ENCODE measurements at regions of chr5 and their contacts with region 1.

Region 1: DNA sequence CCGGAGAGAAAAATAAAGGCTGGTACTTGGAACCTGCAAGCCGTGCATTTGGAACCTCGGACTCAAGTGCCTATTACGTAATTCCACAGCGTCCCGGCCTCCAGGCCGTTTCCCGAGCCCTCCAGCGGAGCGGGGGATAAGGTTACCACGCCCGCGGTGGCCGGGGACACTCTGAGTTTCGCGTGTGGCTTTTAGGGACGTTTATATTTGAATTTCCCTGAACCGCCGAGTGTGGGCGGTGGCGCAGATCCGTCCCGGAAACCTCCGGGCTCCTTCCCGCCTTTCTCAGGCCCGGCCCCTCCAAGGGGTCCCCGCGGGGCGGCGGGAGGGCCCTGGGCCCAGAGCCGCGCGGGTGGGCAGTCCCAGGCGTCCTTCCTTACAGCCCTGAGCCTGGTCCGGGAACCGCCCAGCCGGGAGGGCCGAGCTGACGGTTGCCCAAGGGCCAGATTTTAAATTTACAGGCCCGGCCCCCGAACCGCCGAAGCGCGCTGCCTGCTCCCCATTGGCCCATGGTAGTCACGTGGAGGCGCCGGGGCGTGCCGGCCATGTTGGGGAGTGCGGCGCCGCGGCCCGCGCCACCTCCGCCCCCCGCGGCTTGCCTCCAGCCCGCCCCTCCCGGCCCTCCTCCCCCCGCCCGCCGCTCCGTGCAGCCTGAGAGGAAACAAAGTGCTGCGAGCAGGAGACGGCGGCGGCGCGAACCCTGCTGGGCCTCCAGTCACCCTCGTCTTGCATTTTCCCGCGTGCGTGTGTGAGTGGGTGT is at the start of gene LMNB1:
- DNase-seq: peak; percentile 96
- ATAC-seq: peak; percentile 75
- H3K4me3 Mint-ChIP-seq: peak within 1 kb of the TSS; percentile 95
- H3K27ac Mint-ChIP-seq: peak within 1 kb of the TSS; percentile 97
- H3K4me1 Mint-ChIP-seq: peaks cover 23% of the 10 kb centered on the region
- H3K27me3 Mint-ChIP-seq: no peaks in the 10 kb centered on the region
- CTCF ChIP-seq: no peak
- total RNA-seq, gene LMNB1: 198 TPM

Region 2: GRCh38 chr5:126676195-126676624 is 100.5 kb before region 1 on chr5:
- CTCF ChIA-PET with region 1: interaction called, 277 read pairs
- POLR2A ChIA-PET with region 1: interaction called, 62 read pairs
- intact Hi-C with region 1: loop called (anchors 1 kb)
- DNase-seq: peak; percentile 74
- ATAC-seq: peak; percentile 86
- H3K4me3 Mint-ChIP-seq: no peak overlapping the region
- H3K27ac Mint-ChIP-seq: peak overlapping the region; percentile 53
- H3K4me1 Mint-ChIP-seq: peaks cover 3% of the 10 kb centered on the region
- H3K27me3 Mint-ChIP-seq: no peaks in the 10 kb centered on the region
- CTCF ChIP-seq: peak; percentile 83

Region 3: DNA sequence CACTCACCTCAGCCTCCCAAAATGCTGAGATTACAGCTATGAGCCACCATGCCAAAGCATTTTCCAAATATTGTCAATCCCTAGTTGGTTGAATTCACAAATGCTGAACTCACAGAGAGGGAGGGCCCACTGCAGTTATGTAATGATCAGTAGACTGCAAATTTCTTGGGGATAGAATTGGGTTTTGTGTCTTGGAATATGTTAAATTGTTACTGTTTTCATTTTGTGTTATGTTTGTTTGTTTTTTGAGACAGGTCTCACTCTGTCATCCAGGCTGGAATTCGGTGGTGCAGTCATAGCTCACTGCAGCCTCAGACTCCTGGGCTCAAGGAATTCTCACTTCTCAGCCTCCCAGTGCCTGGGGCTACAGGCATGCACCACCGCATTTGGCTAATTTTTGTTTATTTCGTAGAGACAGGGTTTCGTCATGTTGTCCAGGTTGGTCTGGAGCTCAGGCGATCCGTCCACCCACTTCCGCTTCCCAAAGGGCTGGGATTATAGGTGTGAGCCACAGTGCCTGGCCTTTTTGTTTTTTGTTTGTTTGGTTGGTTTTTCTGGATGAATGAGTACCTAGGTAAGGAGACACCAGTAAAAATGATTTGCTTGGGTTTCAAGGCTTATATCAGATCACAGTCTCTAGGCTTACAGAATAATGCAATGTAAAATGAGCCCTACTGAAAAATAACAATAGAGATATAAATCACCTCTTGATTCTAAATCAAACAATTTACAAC is 31.3 kb before region 1 on chr5:
- CTCF ChIA-PET with region 1: interaction called, 12 read pairs
- POLR2A ChIA-PET with region 1: interaction called, 50 read pairs
- intact Hi-C with region 1: loop called (anchors 5 kb)
- DNase-seq: no peak
- ATAC-seq: no peak
- H3K4me3 Mint-ChIP-seq: no peak overlapping the region
- H3K27ac Mint-ChIP-seq: no peak overlapping the region
- H3K4me1 Mint-ChIP-seq: peaks cover 30% of the 10 kb centered on the region
- H3K27me3 Mint-ChIP-seq: peaks cover 4% of the 10 kb centered on the region
- CTCF ChIP-seq: no peak

Region 4: GRCh38 chr5:126794157-126794828 is 17.6 kb after region 1 on chr5:
- CTCF ChIA-PET with region 1: interaction called, 21 read pairs
- POLR2A ChIA-PET with region 1: interaction called, 13 read pairs
- intact Hi-C with region 1: no loop called
- DNase-seq: no peak
- ATAC-seq: no peak
- H3K4me3 Mint-ChIP-seq: no peak overlapping the region
- H3K27ac Mint-ChIP-seq: no peak overlapping the region
- H3K4me1 Mint-ChIP-seq: peaks cover 44% of the 10 kb centered on the region
- H3K27me3 Mint-ChIP-seq: no peaks in the 10 kb centered on the region
- CTCF ChIP-seq: no peak

Region 5: GRCh38 chr5:126808521-126808988 is 31.9 kb after region 1 on chr5:
- CTCF ChIA-PET with region 1: interaction called, 12 read pairs
- POLR2A ChIA-PET with region 1: interaction called, 21 read pairs
- intact Hi-C with region 1: no loop called
- DNase-seq: no peak
- ATAC-seq: no peak
- H3K4me3 Mint-ChIP-seq: no peak overlapping the region
- H3K27ac Mint-ChIP-seq: no peak overlapping the region
- H3K4me1 Mint-ChIP-seq: peaks cover 36% of the 10 kb centered on the region
- H3K27me3 Mint-ChIP-seq: no peaks in the 10 kb centered on the region
- CTCF ChIP-seq: peak; percentile 39

Region 6: GRCh38 chr5:127176769-127177168 is 400.1 kb after region 1 on chr5:
- CTCF ChIA-PET with region 1: no interaction called
- POLR2A ChIA-PET with region 1: no interaction called
- intact Hi-C with region 1: no loop called
- DNase-seq: no peak
- ATAC-seq: no peak
- H3K4me3 Mint-ChIP-seq: no peak overlapping the region
- H3K27ac Mint-ChIP-seq: no peak overlapping the region
- H3K4me1 Mint-ChIP-seq: no peaks in the 10 kb centered on the region
- H3K27me3 Mint-ChIP-seq: peaks cover 4% of the 10 kb centered on the region
- CTCF ChIP-seq: no peak